K562 (cell line): ENCODE measurements at regions of chr1 and their contacts with region 1.

Region 1: DNA sequence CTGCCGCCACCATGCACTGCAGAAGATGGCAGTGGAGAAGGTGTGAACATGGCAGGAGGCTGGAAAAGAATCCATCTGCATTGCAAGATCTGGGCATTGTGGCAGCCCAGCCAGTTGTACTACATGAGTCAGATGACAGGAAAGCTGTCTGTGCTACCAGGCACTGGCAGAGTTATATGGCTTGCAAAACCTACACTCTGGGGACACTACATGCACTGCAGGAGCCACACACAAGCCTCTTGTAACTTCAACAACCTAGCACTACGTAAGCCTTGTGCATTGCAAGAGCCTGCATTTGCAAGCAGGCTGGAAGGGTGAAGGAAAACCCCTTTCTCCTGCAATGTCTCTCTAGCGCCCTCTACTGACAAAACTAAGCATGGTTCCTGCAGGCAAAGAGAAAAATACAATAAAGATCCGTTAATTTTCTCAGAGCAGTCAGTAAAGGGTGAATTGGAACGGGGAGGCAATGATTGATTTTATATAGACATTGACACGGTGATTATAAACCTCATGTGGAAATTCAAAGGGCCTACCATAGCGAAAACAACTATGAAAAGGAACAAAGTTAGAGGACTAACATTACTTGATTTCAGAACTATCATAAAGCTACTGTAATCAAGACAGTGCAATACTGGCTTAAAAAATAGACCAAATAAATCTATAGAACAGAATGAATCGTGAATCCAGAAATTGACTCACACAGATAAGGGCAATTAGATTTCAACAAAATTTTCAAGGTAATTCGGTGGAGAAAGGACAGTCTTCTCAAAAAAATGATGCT is 26.2 kb upstream of the DYNLT5 start:
- DNase-seq: peak; percentile 34 to 73 (median 45)
- ATAC-seq: peak; percentile 92
- H3K4me3 ChIP-seq: no peak overlapping the region
- H3K27ac ChIP-seq: no peak overlapping the region
- H3K4me1 ChIP-seq: no peaks in the 10 kb centered on the region
- H3K27me3 ChIP-seq: peaks cover 0 to 9% of the 10 kb centered on the region in 2 experiments; a peak in 3 of 5 replicates
- CTCF ChIP-seq: peak; percentile 76 to 91 (median 86)
- EP300 ChIP-seq: no peak
- POLR2A ChIP-seq: no peak
- RAD21 ChIP-seq: peak; percentile 53 to 72

Region 2: GRCh38 chr1:66253330-66253921 is 472.6 kb before region 1 on chr1:
- CTCF ChIA-PET with region 1: no interaction called
- POLR2A ChIA-PET with region 1: no interaction called
- in situ Hi-C with region 1: no loop called
- intact Hi-C with region 1: loop called (anchors 5 kb)
- DNase-seq: peak in 2 of 4 experiments; percentile 28 to 32
- ATAC-seq: peak; percentile 81
- H3K4me3 ChIP-seq: no peak overlapping the region
- H3K27ac ChIP-seq: no peak overlapping the region
- H3K4me1 ChIP-seq: no peaks in the 10 kb centered on the region
- H3K27me3 ChIP-seq: no peaks in the 10 kb centered on the region
- CTCF ChIP-seq: peak; percentile 34 to 78 (median 60); a peak in 5 of 6 replicates
- EP300 ChIP-seq: no peak
- POLR2A ChIP-seq: no peak
- RAD21 ChIP-seq: peak; percentile 81 to 88

Region 3: DNA sequence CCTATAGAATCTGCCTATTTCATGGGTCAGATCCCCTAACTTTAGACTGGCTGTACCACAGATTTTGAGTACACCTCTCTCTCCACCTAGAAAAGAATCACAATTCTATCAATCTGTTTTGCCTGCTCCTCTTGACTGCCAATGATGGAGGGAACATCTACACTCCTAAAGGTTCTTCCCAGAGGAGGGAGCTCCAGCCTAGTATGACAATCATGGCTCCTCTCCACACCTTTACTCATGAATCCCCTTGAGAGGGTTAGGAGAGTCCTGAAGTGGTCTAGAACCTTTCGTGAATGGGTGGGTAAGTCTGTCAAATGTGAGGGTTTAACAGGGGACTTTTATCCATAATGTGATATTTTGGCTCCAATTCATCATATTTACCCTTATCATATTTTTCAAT is 150.6 kb after region 1 on chr1:
- CTCF ChIA-PET with region 1: no interaction called
- POLR2A ChIA-PET with region 1: no interaction called
- in situ Hi-C with region 1: no loop called
- intact Hi-C with region 1: no loop called
- DNase-seq: peak in 1 of 4 experiments; percentile 14
- ATAC-seq: peak; percentile 85
- H3K4me3 ChIP-seq: no peak overlapping the region
- H3K27ac ChIP-seq: no peak overlapping the region
- H3K4me1 ChIP-seq: no peaks in the 10 kb centered on the region
- H3K27me3 ChIP-seq: no peaks in the 10 kb centered on the region
- CTCF ChIP-seq: peak; percentile 13 to 46 (median 25); a peak in 2 of 6 replicates
- EP300 ChIP-seq: no peak
- POLR2A ChIP-seq: no peak
- RAD21 ChIP-seq: peak in 1 of 2 experiments; percentile 50; a peak in 2 of 4 replicates